ENCODE measurements at regions of chr6 and their contacts with region 1.

Region 1: DNA sequence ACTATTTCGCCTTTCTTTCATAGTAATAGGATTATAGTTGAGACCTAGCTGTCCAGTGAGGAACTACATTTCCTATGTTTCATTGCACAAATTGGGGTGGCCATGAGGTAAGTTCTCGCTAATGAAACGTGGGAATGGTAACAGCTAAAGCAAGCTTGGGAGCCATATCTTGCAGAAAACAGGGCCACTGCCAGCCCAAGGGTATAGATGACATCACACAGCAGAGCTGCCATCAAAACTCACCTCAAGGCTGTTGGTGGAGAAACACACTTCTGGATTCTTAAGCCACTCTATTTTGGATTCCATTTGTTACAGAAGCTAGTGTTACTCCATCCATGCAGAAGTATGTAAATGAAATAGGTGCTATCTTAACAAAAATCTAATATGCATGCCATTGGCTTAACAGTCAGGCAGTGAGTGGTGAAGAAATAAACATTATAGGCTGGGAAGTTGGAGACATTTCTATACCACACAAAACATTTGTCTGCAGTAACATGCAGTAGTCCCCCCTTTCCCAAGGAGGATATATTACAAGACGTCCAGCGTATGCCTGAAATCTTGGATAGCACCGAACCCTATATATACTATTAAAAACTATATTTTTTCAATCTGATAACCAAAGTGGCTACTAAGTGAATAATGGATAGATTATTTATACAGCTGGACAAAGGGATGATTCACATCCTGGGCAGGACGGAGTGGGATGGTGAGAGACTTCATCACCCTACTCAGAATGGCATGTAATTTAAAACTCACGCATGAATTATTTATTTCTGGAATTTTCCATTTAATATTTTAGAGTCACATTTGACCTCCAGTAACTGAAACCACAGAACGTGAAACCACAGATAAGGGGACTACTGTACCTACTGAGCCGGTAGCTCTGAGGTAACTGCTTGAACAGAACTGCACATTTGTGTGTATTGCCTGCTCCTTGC is 160.1 kb upstream of the PLN start:
- DNase-seq: peak; percentile 96
- ATAC-seq: peak; percentile 88
- H3K4me3 ChIP-seq: no peak overlapping the region
- H3K27ac ChIP-seq: peak overlapping the region; percentile 75
- H3K4me1 ChIP-seq: peaks cover 13% of the 10 kb centered on the region
- H3K27me3 ChIP-seq: no peaks in the 10 kb centered on the region
- CTCF ChIP-seq: no peak
- POLR2A ChIP-seq: no peak
- RAD21 ChIP-seq: no peak

Region 2: DNA sequence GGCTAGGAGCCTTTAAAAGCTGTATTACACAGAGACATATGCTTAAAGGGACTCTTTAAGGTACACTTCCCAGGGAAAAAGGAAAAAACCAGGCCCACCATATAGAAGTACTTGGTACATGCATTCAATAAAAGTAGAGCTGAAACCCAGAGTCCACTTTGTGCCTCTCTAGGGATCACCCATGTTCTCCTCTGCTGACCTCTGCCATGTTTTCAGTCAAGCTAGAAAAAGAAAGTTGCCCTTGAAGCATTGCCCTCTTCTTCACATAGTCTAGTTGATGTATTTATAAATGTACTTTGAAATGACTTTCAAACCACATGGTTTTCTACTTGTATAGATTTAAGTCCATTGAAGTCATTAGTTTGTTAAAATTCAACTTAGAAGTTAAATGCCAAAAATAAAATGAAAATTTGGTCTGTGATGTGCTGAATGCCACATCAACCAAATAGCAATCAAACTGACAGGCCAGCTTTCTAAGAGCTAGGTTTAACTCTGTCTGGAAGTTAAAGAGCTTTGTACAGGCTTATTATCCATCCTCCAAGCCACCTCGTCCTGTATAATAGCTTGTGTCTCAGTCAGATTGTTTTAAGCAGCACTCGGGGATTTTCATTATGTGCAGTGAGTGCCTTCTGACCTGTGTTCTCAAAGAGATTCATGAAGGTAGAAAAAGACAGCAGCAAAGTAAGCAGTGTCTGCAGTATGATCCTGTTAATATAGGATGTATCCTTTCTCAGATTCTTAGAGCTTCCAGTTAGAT is 78.5 kb before region 1 on chr6:
- CTCF ChIA-PET with region 1: no interaction called
- POLR2A ChIA-PET with region 1: no interaction called
- dilution Hi-C with region 1: no loop called
- in situ Hi-C with region 1: no loop called
- intact Hi-C with region 1: loop called (anchors 5 kb)
- DNase-seq: no peak
- ATAC-seq: no peak
- H3K4me3 ChIP-seq: no peak overlapping the region
- H3K27ac ChIP-seq: no peak overlapping the region
- H3K4me1 ChIP-seq: peaks cover 2% of the 10 kb centered on the region; the same call in 1 of the 2 replicates
- H3K27me3 ChIP-seq: no peaks in the 10 kb centered on the region
- CTCF ChIP-seq: no peak
- POLR2A ChIP-seq: no peak
- RAD21 ChIP-seq: no peak

Region 3: GRCh38 chr6:118829817-118830478 is 441.9 kb after region 1 on chr6:
- CTCF ChIA-PET with region 1: no interaction called
- POLR2A ChIA-PET with region 1: no interaction called
- dilution Hi-C with region 1: no loop called
- in situ Hi-C with region 1: no loop called
- intact Hi-C with region 1: no loop called
- DNase-seq: no peak
- ATAC-seq: no peak
- H3K4me3 ChIP-seq: no peak overlapping the region
- H3K27ac ChIP-seq: no peak overlapping the region
- H3K4me1 ChIP-seq: no peaks in the 10 kb centered on the region
- H3K27me3 ChIP-seq: no peaks in the 10 kb centered on the region
- CTCF ChIP-seq: no peak
- POLR2A ChIP-seq: no peak
- RAD21 ChIP-seq: no peak